PC-9 (cell line): ENCODE measurements at regions of chr13 and their contacts with region 1.

Region 1: GRCh38 chr13:51452361-51453206 is at the start of gene INTS6:
- DNase-seq: peak; percentile 96 to 99
- H3K4me3 ChIP-seq: peak within 1 kb of the TSS; percentile 97
- H3K27ac ChIP-seq: peak within 1 kb of the TSS; percentile 86
- H3K4me1 ChIP-seq: peaks cover 18% of the 10 kb centered on the region; the same call in 1 of the 2 replicates
- H3K27me3 ChIP-seq: no peaks in the 10 kb centered on the region
- CTCF ChIP-seq: no peak
- total RNA-seq, gene INTS6: 43.5 and 45.5 TPM in 2 replicates

Region 2: DNA sequence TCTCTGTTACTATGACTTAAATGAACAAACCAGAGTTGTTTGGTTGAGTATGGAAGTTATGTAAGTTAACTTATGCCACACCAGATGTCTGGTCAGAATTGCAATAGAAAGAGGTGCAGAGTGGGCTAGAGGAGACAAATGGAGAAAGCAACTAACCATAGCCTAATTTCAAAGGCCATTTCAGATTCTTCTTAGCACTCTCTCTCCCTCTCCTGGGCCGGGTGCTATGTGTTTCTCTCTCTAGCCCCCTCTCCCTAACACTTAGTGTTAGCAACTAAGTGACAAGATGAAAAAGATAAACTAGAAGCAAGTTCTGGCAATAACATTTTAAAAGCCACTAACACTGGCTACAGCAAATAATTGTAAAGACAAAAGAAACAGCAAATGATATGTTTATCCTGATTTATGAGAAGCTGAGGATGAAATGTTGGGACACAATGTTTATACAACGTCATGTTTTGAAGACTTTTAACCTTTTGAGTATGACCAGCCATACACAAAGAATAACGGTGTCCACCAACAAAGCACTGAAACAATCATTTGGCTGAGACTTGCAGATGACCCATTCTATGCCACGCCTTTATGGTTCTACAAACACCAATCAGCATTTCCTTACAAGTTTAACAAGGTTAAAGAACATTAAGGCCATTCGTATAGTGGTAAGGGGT is 94.5 kb before region 1 on chr13:
- CTCF ChIA-PET with region 1: no interaction called
- POLR2A ChIA-PET with region 1: no interaction called
- intact Hi-C with region 1: no loop called
- DNase-seq: no peak
- H3K4me3 ChIP-seq: no peak overlapping the region
- H3K27ac ChIP-seq: no peak overlapping the region
- H3K4me1 ChIP-seq: no peaks in the 10 kb centered on the region
- H3K27me3 ChIP-seq: no peaks in the 10 kb centered on the region
- CTCF ChIP-seq: no peak

Region 3: DNA sequence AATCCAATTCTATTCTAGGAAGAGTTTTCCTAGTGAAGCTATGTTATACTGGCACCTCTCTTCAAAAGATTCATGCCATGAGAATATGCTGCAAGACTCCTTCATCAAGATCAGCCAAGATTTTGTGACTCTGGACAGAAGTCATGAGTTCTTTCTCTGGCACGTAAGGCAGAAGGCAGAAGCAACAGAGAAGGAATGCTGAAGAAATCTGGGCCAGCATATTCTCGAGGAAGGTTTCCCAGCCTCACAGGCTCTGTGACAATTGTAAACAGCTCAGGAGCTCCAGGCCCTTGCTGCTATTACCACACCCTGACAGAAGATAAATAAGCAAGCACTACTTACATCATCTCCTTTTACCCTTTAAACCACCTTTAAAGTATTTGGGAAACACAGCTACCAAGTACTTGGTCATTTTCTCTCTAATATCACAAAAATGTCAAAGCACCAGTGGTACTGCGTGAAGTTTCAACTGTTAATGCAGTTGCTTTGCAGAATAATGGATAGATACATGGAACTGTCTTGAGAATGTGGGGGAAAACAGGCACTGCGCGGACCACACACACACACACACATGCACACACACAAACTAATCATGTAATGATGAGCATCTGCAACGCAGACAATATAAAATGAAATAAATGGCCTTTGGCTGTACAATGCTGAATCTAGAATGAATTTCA is 55.2 kb before region 1 on chr13:
- CTCF ChIA-PET with region 1: no interaction called
- POLR2A ChIA-PET with region 1: no interaction called
- intact Hi-C with region 1: no loop called
- DNase-seq: peak in 1 of 2 experiments; percentile 36
- H3K4me3 ChIP-seq: no peak overlapping the region
- H3K27ac ChIP-seq: no peak overlapping the region
- H3K4me1 ChIP-seq: peaks cover 12% of the 10 kb centered on the region; the same call in 1 of the 2 replicates
- H3K27me3 ChIP-seq: no peaks in the 10 kb centered on the region
- CTCF ChIP-seq: no peak

Region 4: DNA sequence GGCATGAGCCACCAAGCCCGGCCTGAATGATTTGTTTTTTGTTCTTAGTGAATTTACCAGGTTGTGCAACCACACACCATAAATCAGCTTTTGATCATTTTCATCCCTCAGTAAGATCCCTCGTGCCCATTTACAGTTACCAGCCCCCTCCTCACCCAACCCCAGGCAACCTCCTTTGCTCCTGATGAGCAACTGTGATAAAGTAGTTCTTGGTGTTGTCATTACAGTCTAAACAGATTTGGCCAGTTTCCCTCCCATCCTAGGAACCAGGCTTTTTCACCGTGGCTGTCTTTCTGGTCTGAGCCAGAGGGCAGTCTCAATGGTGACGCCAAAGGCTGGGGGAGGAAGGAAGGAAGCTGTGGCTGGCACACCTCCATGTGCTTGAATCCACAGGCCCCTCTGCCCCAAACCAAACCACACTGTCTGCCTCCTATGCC is 70.5 kb after region 1 on chr13:
- CTCF ChIA-PET with region 1: no interaction called
- POLR2A ChIA-PET with region 1: no interaction called
- intact Hi-C with region 1: loop called (anchors 5 kb)
- DNase-seq: peak; percentile 49 to 55
- H3K4me3 ChIP-seq: no peak overlapping the region
- H3K27ac ChIP-seq: peak overlapping the region; percentile 95
- H3K4me1 ChIP-seq: peaks cover 57% of the 10 kb centered on the region
- H3K27me3 ChIP-seq: no peaks in the 10 kb centered on the region
- CTCF ChIP-seq: no peak

Region 5: GRCh38 chr13:51645154-51645650 is 192.6 kb after region 1 on chr13:
- CTCF ChIA-PET with region 1: no interaction called
- POLR2A ChIA-PET with region 1: interaction called, 17 read pairs
- intact Hi-C with region 1: loop called (anchors 5 kb)
- DNase-seq: peak; percentile 22 to 63
- H3K4me3 ChIP-seq: no peak overlapping the region
- H3K27ac ChIP-seq: peak overlapping the region; percentile 91
- H3K4me1 ChIP-seq: peaks cover 47% of the 10 kb centered on the region
- H3K27me3 ChIP-seq: no peaks in the 10 kb centered on the region
- CTCF ChIP-seq: no peak

Region 6: DNA sequence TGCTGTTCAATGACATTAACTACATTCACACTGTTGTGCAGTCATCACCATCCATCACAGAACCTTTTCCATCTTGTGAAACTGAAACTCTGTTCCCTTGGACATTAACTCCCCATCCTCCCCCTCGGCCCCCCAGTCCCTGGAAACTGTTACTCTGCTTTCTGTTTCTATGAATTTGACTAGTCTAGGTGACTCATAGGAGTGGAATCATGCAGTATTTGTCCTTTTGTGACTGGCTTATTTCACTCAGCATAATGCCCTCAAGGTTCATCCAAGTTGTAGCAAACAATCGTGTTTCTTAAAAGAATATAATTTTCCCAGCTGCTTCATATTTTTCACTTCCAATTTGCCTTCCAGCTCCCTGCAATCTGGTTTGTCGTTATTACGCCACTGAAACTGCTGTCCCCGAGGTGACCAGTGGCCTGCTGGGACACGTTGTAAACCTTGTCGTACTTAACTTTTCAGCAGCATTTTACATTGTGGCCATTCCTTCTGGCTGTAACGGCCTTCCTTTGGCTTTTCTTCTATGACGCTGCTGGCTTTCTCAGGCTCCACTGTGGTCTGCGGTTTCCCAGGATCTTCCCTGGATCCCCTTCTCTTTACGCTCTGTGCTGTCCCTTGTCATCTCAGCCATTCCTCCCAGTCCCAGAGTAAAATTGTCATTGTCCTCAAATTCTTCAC is 277.4 kb after region 1 on chr13:
- CTCF ChIA-PET with region 1: no interaction called
- POLR2A ChIA-PET with region 1: no interaction called
- intact Hi-C with region 1: loop called (anchors 5 kb)
- DNase-seq: peak in 1 of 2 experiments; percentile 49
- H3K4me3 ChIP-seq: no peak overlapping the region
- H3K27ac ChIP-seq: no peak overlapping the region
- H3K4me1 ChIP-seq: peaks cover 15% of the 10 kb centered on the region
- H3K27me3 ChIP-seq: no peaks in the 10 kb centered on the region
- CTCF ChIP-seq: no peak

Region 7: DNA sequence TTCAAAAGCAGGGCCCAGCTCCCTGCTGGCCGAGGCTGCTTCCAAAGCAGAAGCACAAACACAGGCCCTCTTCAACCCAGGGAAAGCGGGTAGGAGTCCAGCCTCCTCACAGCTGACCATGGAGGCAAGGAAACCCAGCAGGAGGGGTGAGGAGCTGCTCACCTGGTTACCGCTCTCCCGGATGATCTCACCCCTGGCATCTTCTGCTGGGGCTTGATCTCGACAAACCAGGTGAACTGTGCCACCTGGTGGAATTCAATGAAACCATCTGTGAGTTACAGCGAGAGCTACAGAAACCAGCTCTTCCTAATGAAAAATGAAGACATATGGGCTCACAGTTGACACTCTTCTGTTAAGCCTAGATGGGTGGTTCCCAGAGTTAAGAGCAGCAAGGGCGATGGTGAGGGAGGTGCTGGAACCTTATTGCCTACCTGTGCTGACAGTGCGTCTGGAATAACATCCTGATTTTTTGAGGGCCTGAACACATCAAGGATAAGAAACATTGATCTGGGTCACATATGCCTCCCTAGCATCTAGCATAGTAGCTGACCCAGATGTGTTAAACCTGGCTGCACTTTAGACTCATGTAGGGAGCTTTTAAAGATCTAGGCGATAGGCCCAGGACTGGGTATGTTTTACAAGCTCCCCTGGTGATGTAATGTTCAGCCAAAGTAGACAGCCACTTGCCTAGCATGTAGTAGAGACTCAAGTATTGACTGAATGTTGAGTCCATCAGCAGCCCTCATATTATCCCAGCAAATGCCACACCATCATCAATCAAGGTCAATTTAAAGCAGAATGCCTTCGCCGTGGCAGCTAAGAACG is 345.3 kb after region 1 on chr13:
- CTCF ChIA-PET with region 1: interaction called, 5 read pairs
- POLR2A ChIA-PET with region 1: interaction called, 14 read pairs
- intact Hi-C with region 1: loop called (anchors 1 kb)
- DNase-seq: peak; percentile 54 to 66
- H3K4me3 ChIP-seq: no peak overlapping the region
- H3K27ac ChIP-seq: no peak overlapping the region
- H3K4me1 ChIP-seq: peaks cover 24% of the 10 kb centered on the region
- H3K27me3 ChIP-seq: no peaks in the 10 kb centered on the region
- CTCF ChIP-seq: peak; percentile 80